ENCODE measurements at regions of chr19 and their contacts with region 1.

Region 1: DNA sequence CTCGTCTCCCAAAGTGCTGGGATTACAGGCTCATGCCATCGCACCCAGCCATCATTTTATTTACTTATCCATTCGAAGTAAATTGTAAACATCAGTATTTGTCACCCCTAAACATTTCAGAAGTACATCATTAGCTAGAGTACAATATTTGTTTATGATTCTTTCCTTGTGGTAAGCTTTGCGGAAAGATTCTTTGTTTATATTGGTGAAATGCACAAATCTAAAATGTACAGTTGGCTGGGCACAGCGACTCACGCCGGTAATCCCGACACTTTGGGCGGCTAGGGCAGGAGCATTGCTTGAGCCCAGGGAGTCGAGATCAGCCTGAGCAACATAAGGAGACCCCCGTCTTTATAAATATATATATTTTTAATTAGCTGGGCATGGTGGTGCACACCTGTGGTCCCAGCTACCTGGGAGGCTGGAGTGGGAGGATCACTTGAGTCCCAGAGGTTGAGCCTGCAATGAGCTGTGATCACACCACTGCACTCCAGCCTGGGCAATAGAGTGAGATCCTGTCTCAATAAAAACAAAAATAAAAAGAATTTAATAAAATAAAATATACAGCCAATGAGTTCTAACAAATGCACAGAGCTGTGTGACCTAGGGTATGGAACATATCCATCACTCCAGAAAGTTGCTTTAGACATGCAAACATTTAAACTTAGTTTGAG is 10.2 kb downstream of the LGALS7B start:
- DNase-seq: no peak
- ATAC-seq: no peak
- H3K4me3 Mint-ChIP-seq: no peak overlapping the region
- H3K27ac Mint-ChIP-seq: no peak overlapping the region
- H3K4me1 Mint-ChIP-seq: peaks cover 3% of the 10 kb centered on the region
- H3K27me3 Mint-ChIP-seq: no peaks in the 10 kb centered on the region

Region 2: GRCh38 chr19:38759590-38760003 is 39.6 kb before region 1 on chr19:
- CTCF ChIA-PET with region 1: no interaction called
- POLR2A ChIA-PET with region 1: no interaction called
- intact Hi-C with region 1: loop called in 1 of 2 experiments (anchors 5 kb)
- DNase-seq: no peak
- ATAC-seq: no peak
- H3K4me3 Mint-ChIP-seq: no peak overlapping the region
- H3K27ac Mint-ChIP-seq: no peak overlapping the region
- H3K4me1 Mint-ChIP-seq: peaks cover 3% of the 10 kb centered on the region
- H3K27me3 Mint-ChIP-seq: no peaks in the 10 kb centered on the region

Region 3: GRCh38 chr19:38812841-38813320 is 13.7 kb after region 1 on chr19 and contains the start of gene LGALS4:
- CTCF ChIA-PET with region 1: no interaction called
- POLR2A ChIA-PET with region 1: no interaction called
- intact Hi-C with region 1: no loop called
- DNase-seq: no peak
- ATAC-seq: no peak
- H3K4me3 Mint-ChIP-seq: no peak within 1 kb of the TSS
- H3K27ac Mint-ChIP-seq: no peak within 1 kb of the TSS
- H3K4me1 Mint-ChIP-seq: no peaks in the 10 kb centered on the region
- H3K27me3 Mint-ChIP-seq: no peaks in the 10 kb centered on the region
- total RNA-seq, gene LGALS4: 0.59 to 1.1 TPM

Region 4: GRCh38 chr19:38970664-38971532 is 171.7 kb after region 1 on chr19:
- CTCF ChIA-PET with region 1: no interaction called
- POLR2A ChIA-PET with region 1: no interaction called
- intact Hi-C with region 1: no loop called
- DNase-seq: no peak
- ATAC-seq: no peak
- H3K4me3 Mint-ChIP-seq: no peak overlapping the region
- H3K27ac Mint-ChIP-seq: no peak overlapping the region
- H3K4me1 Mint-ChIP-seq: peaks cover 8% of the 10 kb centered on the region
- H3K27me3 Mint-ChIP-seq: peaks cover 10% of the 10 kb centered on the region

Region 5: GRCh38 chr19:39328046-39328705 is 529.0 kb after region 1 on chr19:
- CTCF ChIA-PET with region 1: no interaction called
- POLR2A ChIA-PET with region 1: no interaction called
- intact Hi-C with region 1: no loop called
- DNase-seq: peak; percentile 90
- ATAC-seq: peak; percentile 39
- H3K4me3 Mint-ChIP-seq: no peak overlapping the region
- H3K27ac Mint-ChIP-seq: peak overlapping the region; percentile 51
- H3K4me1 Mint-ChIP-seq: peaks cover 40% of the 10 kb centered on the region
- H3K27me3 Mint-ChIP-seq: no peaks in the 10 kb centered on the region

Measured in activated CD4-positive, alpha-beta T cell treated with anti-CD3 and anti-CD28 coated beads for 36 hours (primary cell).